ENCODE measurements at regions of chr12 and their contacts with region 1.

Region 1: DNA sequence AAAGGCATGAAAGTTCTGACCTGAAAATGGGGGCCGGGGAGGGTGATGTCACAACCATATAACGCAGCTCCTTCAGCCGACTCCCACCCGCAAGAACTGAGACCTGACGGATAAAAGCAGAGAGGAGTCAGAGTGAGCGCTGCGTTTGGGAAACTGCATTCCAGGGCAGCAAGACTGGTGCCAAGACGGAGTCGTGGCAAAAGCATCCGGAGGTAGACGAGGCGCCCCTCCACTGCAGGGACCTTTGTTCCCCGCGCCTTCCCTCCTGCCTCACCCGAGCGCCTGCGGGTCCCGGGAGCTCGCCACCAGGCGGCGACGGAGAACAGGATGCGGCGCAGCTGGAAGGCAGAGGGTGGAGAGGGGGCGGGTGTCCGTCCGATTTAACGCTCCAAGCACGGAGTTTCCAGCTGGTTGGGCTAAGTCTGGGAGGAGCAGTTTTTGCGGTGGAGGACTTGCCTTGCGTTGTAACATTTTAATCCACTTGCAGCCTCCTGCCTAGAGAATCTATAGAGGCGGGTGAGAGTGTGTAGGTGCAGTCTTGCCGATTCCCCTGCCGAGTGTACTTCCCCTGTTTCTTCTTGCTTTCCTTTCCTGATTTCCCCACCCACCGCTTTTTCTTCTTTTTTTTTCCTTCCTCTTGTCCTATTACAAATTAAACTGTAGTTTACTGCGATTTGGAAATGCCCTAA is 1.2 kb upstream of the CPNE8 start:
- DNase-seq: peak; percentile 94 to 95
- H3K4me3 ChIP-seq: peak overlapping the region; percentile 74
- H3K4me1 ChIP-seq: peaks cover 24% of the 10 kb centered on the region
- H3K27me3 ChIP-seq: no peaks in the 10 kb centered on the region

Region 2: GRCh38 chr12:38138225-38139221 is 768.1 kb before region 1 on chr12:
- in situ Hi-C with region 1: loop called (anchors 25 kb)
- DNase-seq: peak; percentile 62 to 89
- H3K4me3 ChIP-seq: peak overlapping the region; percentile 39
- H3K4me1 ChIP-seq: no peaks in the 10 kb centered on the region
- H3K27me3 ChIP-seq: no peaks in the 10 kb centered on the region

Region 3: GRCh38 chr12:38332814-38333213 is 573.8 kb before region 1 on chr12:
- in situ Hi-C with region 1: loop called (anchors 25 kb)
- DNase-seq: no peak
- H3K4me3 ChIP-seq: no peak overlapping the region
- H3K4me1 ChIP-seq: peaks cover 5% of the 10 kb centered on the region; the same call in 1 of the 2 replicates
- H3K27me3 ChIP-seq: no peaks in the 10 kb centered on the region

Region 4: DNA sequence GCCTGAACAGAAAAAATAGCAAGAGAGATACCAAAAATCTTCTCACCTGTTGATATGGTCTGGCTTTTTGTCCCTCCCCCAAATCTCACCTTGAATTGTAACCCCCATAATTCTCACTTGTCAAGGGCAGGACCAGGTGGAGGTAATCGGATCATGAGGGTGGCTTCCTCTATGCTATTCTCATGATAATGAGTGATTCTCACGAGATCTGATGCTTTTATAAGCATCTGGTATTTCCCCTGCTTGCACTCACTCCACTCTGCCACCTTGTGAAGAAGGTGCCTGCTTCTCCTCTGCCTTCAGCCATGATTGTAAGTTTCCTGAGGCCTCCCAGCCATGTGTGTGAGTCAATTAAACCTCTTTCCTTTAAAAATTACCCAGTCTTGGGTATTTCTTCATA is 292.5 kb before region 1 on chr12:
- in situ Hi-C with region 1: no loop called
- DNase-seq: no peak
- H3K4me3 ChIP-seq: no peak overlapping the region
- H3K4me1 ChIP-seq: no peaks in the 10 kb centered on the region
- H3K27me3 ChIP-seq: no peaks in the 10 kb centered on the region

Region 5: DNA sequence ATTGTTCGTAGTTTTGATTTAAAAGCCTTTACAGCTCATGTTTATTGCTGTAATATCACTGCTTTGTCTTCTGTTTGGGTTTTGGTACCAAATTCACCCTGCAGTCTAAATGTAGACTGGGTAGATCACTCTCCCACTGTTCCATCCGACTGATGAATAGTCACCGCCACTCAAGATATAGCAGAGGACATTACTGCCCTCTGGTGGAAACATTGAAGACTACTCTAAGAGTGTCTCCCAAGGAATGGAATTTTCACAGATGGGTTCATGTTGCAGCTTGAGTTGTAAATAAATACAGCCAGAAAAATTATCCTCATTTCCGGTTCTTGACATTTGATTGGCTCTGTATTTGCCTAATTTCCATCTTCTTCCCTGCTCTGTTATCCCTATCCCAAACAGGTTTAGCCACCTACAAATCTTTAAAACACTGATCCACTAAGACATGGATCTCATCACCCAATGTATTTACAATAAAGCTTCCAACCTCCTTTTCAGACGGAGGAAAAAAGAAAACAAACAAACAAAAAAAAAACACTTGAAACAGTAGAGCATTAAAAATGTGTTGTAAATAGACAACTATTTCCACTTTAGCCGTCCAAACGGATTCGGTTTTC is 197.0 kb after region 1 on chr12:
- in situ Hi-C with region 1: loop called (anchors 5 kb)
- DNase-seq: peak; percentile 59 to 84
- H3K4me3 ChIP-seq: no peak overlapping the region
- H3K4me1 ChIP-seq: peaks cover 13% of the 10 kb centered on the region
- H3K27me3 ChIP-seq: no peaks in the 10 kb centered on the region

Region 6: DNA sequence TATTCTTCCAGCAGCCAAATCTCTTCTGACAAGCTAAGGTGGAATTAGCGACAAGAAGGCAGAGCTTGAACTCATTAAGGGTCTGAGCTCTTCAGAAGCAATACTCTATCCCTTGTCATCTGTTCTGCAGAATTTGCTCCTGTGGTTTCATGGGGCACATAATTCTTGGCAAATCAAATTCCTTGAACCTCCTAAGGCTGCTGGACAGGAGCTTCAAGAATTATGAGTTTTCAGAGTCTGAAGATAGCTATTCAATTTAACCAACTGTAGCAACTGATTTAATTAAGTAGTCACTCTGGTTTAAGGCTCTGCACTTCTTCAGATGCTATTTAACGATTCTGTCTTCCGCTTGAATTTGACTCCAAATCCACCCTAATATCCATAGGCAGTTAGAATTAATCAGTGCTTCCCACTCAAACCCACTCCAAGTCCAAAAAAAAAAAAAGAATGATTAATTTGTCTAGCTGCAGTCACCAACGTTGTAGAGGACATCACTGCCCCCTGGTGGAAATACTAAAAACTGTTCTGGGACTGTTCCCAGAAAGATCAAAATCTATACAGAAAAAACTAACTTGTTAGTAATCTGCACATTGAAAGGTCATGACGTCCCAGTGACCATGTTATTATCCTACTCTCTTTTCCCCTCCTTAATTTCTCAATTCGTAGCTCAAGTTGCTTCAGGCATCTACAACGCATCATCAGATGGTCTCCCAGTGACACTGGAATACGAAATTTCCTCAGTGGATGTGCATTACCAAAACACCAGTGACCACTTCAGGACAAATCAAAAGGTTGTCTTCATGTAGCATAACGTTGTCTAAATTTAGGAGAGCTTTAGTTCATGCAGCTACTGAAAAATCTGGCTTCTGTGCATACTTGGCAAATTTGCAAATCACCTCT is 366.5 kb after region 1 on chr12:
- in situ Hi-C with region 1: loop called (anchors 10 kb)
- DNase-seq: peak; percentile 67 to 73
- H3K4me3 ChIP-seq: no peak overlapping the region
- H3K4me1 ChIP-seq: 0 out of 2 replicates have a peak, but pooled peaks cover 2% of the 10 kb centered on the region
- H3K27me3 ChIP-seq: no peaks in the 10 kb centered on the region

Region 7: DNA sequence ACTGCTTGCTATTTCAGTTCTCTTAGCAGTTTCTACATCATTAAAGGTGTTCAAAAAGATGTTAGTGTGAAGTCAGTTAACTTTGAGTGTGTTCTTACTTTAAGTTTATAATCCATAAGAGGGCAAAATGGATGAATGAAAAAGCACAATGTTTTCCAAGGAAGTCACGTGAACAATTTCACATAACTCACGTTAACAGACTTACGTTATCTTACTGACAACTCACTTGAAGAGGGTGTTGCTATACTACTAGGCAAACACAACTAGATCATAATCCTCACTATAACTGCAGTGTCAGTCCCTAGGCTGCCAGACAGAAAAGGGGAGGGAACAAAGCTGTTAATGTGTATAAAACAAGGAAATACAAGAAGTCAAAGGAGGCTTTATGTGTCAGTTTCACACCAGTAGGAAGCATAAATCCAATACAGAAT is 1192.8 kb after region 1 on chr12:
- in situ Hi-C with region 1: no loop called
- DNase-seq: no peak
- H3K4me3 ChIP-seq: no peak overlapping the region
- H3K4me1 ChIP-seq: peaks cover 11% of the 10 kb centered on the region
- H3K27me3 ChIP-seq: no peaks in the 10 kb centered on the region